Body of pancreas (tissue), 4 donors: ENCODE measurements at regions of chr11 and their contacts with region 1.

Region 1: DNA sequence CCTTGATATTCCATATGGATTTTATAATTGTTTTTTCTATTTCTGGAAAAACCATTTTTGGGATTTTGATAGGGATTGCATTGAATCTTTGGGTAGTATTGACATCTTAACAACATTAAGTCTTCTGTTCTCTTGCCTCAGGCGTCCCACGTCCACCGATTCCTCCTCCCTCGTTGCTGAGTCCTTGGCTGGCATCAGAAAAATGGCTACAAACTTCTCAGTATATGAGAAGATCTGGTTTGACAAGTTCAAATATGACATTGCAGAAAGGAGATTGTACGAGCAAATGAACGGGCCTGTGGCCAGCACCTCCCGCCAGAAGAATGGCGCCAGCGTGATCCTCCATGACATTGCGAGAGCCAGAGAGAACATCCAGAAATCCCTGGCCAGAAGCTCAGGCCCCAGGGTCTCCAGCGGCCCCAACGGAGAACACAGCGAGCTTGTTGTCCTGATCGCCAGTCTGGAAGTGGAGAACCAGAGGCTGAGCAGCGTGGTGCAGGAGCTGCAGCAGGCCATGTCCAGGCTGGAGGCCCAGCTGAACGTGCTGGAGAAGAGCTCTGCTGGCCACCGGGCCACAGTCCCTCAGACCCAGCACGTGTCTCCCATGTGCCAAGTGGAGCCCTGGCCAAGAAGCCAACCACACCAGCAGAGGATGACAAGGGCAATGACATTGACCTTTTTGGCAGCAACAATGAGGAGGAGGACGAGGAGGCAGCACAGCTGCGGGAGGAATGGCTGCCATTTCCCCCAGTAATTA is 20.7 kb upstream of the SCGB1D1 start:
- DNase-seq: no peak
- ATAC-seq: no peak
- H3K4me3 ChIP-seq: no peak overlapping the region
- H3K27ac ChIP-seq: no peak overlapping the region
- H3K4me1 ChIP-seq: no peaks in the 10 kb centered on the region
- H3K27me3 ChIP-seq: peaks cover 0 to 3% of the 10 kb centered on the region in 2 donors
- CTCF ChIP-seq: no peak
- POLR2A ChIP-seq: no peak

Region 2: GRCh38 chr11:62306227-62306626 is 137.0 kb after region 1 on chr11:
- intact Hi-C with region 1: loop called (anchors 5 kb)
- DNase-seq: no peak
- ATAC-seq: no peak
- H3K4me3 ChIP-seq: no peak overlapping the region
- H3K27ac ChIP-seq: no peak overlapping the region
- H3K4me1 ChIP-seq: no peaks in the 10 kb centered on the region
- H3K27me3 ChIP-seq: no peaks in the 10 kb centered on the region
- CTCF ChIP-seq: no peak
- POLR2A ChIP-seq: no peak